Endothelial cell of umbilical vein (primary cell): ENCODE measurements at regions of chr16 and their contacts with region 1.

Region 1: DNA sequence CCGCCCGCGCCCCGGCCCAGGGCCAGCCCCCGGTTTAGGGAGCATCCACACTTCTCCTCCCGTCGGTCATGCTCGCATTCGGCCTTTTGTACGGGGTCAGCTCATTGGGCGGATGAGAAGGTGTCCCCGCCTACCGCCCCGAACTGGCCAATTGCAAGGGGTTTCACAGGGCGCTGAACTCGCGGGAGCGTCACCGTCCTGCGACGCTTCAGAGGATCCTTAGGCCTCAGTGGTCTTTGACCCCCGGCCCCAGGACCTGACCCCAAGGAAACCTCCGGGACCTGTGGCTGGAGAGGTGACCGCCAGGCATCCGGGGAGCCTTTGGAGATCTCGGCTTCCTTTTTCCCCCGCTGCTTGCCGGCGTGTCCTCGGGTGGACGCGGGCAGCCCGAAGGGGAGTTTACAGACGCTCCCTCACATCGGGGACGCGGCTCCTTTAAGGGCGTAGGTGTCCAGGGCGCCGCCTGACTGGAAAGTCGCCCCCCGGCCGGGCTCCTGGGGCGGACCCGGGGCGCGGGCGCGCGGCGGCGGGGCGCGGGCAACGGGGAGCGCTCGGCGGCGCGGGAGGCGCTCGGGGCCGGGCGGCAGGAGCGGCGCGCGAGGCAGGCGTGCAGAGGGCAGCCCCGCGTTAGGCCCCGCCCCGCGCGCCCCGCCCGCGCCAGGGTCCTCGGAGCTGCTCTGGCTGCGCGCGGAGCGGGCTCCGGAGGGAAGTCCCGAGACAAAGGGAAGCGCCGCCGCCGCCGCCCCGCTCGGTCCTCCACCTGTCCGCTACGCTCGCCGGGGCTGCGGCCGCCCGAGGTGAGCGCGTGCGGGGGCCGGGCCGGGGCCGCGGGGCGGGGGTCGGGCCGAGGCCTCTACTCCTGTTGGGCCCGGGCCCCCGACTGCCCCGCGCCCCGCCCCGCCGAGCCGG is at the start of gene UBE2I:
- DNase-seq: peak; percentile 99
- H3K4me3 ChIP-seq: peak within 1 kb of the TSS; percentile 74 to 94 (median 87)
- H3K27ac ChIP-seq: peak within 1 kb of the TSS; percentile 87
- H3K4me1 ChIP-seq: peaks cover 14% of the 10 kb centered on the region
- H3K27me3 ChIP-seq: no peaks in the 10 kb centered on the region
- CTCF ChIP-seq: no peak
- POLR2A ChIP-seq: peak; percentile 57
- total RNA-seq, gene UBE2I: 230 and 233 TPM in 2 replicates

Region 2: GRCh38 chr16:1338119-1338730 is 29.0 kb after region 1 on chr16:
- CTCF ChIA-PET with region 1: no interaction called
- POLR2A ChIA-PET with region 1: no interaction called
- dilution Hi-C with region 1: no loop called
- intact Hi-C with region 1: no loop called
- DNase-seq: no peak
- H3K4me3 ChIP-seq: no peak overlapping the region
- H3K27ac ChIP-seq: no peak overlapping the region
- H3K4me1 ChIP-seq: no peaks in the 10 kb centered on the region
- H3K27me3 ChIP-seq: peaks cover 14 to 23% of the 10 kb centered on the region in 2 experiments
- CTCF ChIP-seq: peak; percentile 10 to 53
- POLR2A ChIP-seq: no peak

Region 3: DNA sequence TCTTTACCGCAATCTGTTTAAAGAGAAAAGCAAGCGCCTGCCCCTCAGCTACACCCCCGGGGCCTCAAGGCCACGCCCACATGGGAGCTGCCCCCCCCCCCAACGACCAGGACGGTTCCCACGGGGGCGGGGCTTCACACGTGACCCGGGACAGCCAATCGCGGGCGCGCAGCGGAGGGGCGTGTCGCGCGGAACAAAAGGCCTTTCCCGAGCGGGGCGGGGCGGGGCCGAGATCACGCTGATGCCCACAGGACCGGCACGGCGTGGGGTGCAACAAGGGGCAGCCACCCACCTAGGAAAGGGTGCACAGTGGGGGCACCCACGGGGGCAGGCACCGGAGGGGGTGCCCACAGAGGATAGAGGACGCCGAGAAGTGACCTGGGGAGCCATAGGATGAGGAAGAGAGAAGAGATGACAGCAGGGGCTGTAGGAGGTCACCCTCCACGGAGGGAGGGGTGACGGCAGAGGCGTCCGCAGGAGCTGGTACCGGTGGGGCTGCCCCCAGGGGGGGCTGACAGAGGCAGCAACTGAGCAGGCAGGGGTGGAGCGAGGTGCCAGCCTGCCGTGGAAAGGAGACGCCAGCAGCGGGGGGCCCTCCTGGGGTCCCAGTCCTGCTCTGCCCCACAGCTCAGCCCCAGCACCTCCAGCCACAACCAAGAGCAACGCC is 99.1 kb after region 1 on chr16:
- CTCF ChIA-PET with region 1: no interaction called
- POLR2A ChIA-PET with region 1: no interaction called
- dilution Hi-C with region 1: no loop called
- intact Hi-C with region 1: loop called (anchors 10 kb)
- DNase-seq: peak; percentile 92
- H3K4me3 ChIP-seq: peak overlapping the region; percentile 35 to 51 (median 46)
- H3K27ac ChIP-seq: no peak overlapping the region
- H3K4me1 ChIP-seq: peaks cover 5% of the 10 kb centered on the region
- H3K27me3 ChIP-seq: no peaks in the 10 kb centered on the region
- CTCF ChIP-seq: no peak
- POLR2A ChIP-seq: no peak